ENCODE measurements at regions of chr3 and their contacts with region 1.

Region 1: DNA sequence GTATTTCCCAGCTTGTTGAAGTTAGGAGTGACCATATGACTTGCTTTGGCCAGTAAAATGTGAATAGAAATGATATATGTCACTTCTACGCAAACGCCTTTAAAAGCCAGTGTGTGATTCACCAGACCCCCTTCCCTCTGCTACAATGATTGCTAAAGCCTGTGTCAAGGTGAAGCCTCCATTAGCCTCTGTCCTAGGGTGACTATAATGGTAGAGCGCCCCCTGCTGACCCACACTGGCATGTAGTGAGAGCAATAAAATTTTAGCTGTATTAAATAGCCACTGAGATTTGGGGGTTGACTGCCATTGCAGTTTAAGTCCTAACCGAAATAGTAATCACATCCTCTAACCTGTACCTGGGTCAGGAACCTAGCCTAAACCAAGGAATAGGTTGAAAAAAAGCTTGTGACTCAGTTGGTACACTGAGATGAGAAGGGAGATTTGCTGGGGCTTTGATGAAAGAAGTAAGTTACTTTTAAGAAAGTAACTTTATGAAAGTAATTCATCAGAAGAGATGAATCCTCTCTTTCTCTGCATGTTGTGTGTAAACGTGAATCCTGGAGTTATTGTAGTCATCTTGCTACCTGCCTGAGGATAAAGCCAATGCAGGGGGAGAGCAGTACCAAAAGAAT is 52.6 kb downstream of the GTF2E1 start:
- DNase-seq: peak; percentile 62 to 83 (median 79)
- ATAC-seq: peak; percentile 96
- H3K4me3 ChIP-seq: no peak overlapping the region
- H3K4me3 Mint-ChIP-seq: no peak overlapping the region
- H3K27ac ChIP-seq: no peak overlapping the region
- H3K27ac Mint-ChIP-seq: no peak overlapping the region
- H3K4me1 ChIP-seq: peaks cover 0 to 4% of the 10 kb centered on the region in 2 donors
- H3K4me1 Mint-ChIP-seq: peaks cover 0 to 20% (median 17%) of the 10 kb centered on the region in 7 donors
- H3K27me3 ChIP-seq: no peaks in the 10 kb centered on the region
- H3K27me3 Mint-ChIP-seq: no peaks in the 10 kb centered on the region

Region 2: GRCh38 chr3:119891944-119892721 is 903.0 kb before region 1 on chr3:
- CTCF ChIA-PET with region 1: no interaction called
- POLR2A ChIA-PET with region 1: no interaction called
- intact Hi-C with region 1: loop called in 1 of 2 experiments (anchors 10 kb)
- DNase-seq: peak in 7 of 9 donors; percentile 38 to 68 (median 60)
- ATAC-seq: peak; percentile 78
- H3K4me3 ChIP-seq: no peak overlapping the region
- H3K4me3 Mint-ChIP-seq: peak overlapping the region in 1 of 10 donors; percentile 8
- H3K27ac ChIP-seq: no peak overlapping the region
- H3K27ac Mint-ChIP-seq: peak overlapping the region in 2 of 9 donors; percentile 28 to 39
- H3K4me1 ChIP-seq: no peaks in the 10 kb centered on the region
- H3K4me1 Mint-ChIP-seq: peaks cover 2 to 19% (median 11%) of the 10 kb centered on the region in 7 donors
- H3K27me3 ChIP-seq: no peaks in the 10 kb centered on the region
- H3K27me3 Mint-ChIP-seq: no peaks in the 10 kb centered on the region

Region 3: DNA sequence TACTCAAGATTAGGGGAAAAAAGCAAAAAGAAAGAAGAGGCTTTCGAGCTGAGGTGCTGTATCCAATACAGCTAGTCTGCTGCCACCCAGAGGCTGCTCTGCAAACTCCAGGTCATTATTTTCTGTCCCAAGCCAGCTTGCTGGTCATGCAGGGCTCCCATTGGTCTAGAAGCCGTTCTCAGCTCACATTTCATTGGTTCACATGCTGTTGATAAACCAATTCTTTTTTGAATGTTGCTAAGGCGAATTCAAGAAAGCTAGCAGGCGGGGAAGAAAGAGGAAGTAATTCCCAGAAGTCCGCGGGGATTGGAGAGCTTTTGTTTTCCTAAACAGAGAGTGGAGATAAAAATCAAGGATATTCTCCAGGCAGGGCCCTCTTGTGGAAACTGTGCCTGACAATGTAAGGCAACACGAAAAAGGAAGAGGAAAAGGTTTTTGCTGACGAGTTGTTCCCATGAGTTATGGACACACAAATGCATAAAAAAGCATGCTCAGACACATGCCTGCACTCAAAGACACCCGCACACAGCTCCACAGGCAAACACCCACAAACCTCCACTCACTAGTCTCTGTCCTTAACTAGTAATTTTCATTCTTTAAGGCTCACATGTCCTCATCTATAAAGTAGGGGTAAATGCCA is 377.7 kb before region 1 on chr3:
- CTCF ChIA-PET with region 1: interaction called, 4 read pairs
- POLR2A ChIA-PET with region 1: no interaction called
- intact Hi-C with region 1: loop called (anchors 1 kb)
- DNase-seq: peak; percentile 58 to 83 (median 79)
- ATAC-seq: peak; percentile 100
- H3K4me3 ChIP-seq: peak overlapping the region; percentile 72
- H3K4me3 Mint-ChIP-seq: peak overlapping the region; percentile 80 to 89 (median 88)
- H3K27ac ChIP-seq: no peak overlapping the region
- H3K27ac Mint-ChIP-seq: peak overlapping the region in 8 of 9 donors; percentile 13 to 76 (median 32)
- H3K4me1 ChIP-seq: no peaks in the 10 kb centered on the region
- H3K4me1 Mint-ChIP-seq: peaks cover 16 to 24% (median 18%) of the 10 kb centered on the region in 7 donors
- H3K27me3 ChIP-seq: no peaks in the 10 kb centered on the region
- H3K27me3 Mint-ChIP-seq: peaks cover 0 to 7% (median 6%) of the 10 kb centered on the region in 5 donors

Region 4: DNA sequence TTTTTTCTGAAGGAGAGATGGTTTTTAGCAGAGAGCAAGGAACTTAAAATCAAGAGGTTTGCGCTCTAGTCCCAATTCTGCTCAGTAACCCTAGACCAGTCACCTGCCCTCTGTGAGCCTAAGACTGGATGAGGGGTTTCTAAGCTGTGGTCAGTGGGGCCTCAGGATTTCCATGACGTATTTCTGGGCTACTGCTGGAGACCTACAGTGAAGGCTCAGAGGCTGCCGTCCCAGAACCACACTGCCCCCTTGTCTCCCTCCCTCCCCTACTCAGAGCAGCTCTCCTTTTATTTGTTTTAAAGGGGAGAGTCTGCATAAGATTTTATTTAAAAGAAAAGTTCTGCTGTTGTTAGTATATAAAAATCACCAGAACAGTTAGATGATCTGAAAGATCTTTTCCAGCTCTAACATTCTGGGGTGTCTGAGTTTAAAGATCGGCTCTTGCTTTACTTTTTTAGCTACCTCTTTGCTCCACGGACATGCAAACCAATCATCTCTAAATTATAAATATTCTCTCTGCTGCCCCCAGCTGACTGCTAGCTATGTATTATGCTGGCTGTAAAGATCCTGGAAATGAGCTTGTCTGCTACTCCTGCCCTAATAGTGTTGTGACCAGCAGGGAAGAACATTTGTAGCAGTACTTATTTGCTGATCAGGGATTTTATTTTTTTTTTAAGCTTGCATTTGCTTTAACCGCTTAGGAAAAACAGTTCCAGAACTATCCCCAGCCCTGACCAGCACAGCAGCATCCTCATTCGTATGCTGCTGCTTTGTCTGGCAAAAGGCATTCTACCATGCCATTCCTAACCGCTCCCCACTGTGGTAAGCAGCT is 227.5 kb before region 1 on chr3:
- CTCF ChIA-PET with region 1: interaction called, 114 read pairs
- POLR2A ChIA-PET with region 1: no interaction called
- intact Hi-C with region 1: no loop called
- DNase-seq: peak in 1 of 9 donors; percentile 28
- ATAC-seq: peak; percentile 65
- H3K4me3 ChIP-seq: no peak overlapping the region
- H3K4me3 Mint-ChIP-seq: peak overlapping the region in 9 of 10 donors; percentile 26 to 77 (median 70)
- H3K27ac ChIP-seq: no peak overlapping the region
- H3K27ac Mint-ChIP-seq: peak overlapping the region in 5 of 9 donors; percentile 7 to 58 (median 23)
- H3K4me1 ChIP-seq: no peaks in the 10 kb centered on the region
- H3K4me1 Mint-ChIP-seq: peaks cover 0 to 6% (median 0%) of the 10 kb centered on the region in 7 donors
- H3K27me3 ChIP-seq: peaks cover 0 to 3% of the 10 kb centered on the region in 2 donors
- H3K27me3 Mint-ChIP-seq: peaks cover 0 to 9% (median 4%) of the 10 kb centered on the region in 5 donors

Region 5: GRCh38 chr3:120622870-120623731 is 172.0 kb before region 1 on chr3:
- CTCF ChIA-PET with region 1: no interaction called
- POLR2A ChIA-PET with region 1: no interaction called
- intact Hi-C with region 1: loop called in 1 of 2 experiments (anchors 1 kb)
- DNase-seq: no peak
- ATAC-seq: no peak
- H3K4me3 ChIP-seq: no peak overlapping the region
- H3K4me3 Mint-ChIP-seq: peak overlapping the region in 1 of 10 donors; percentile 61
- H3K27ac ChIP-seq: no peak overlapping the region
- H3K27ac Mint-ChIP-seq: no peak overlapping the region
- H3K4me1 ChIP-seq: no peaks in the 10 kb centered on the region
- H3K4me1 Mint-ChIP-seq: no peaks in the 10 kb centered on the region
- H3K27me3 ChIP-seq: no peaks in the 10 kb centered on the region
- H3K27me3 Mint-ChIP-seq: peaks cover 0 to 13% (median 0%) of the 10 kb centered on the region in 5 donors

Region 6: GRCh38 chr3:120773932-120774331 is 21.2 kb before region 1 on chr3:
- CTCF ChIA-PET with region 1: no interaction called
- POLR2A ChIA-PET with region 1: no interaction called
- intact Hi-C with region 1: no loop called
- DNase-seq: no peak
- ATAC-seq: no peak
- H3K4me3 ChIP-seq: no peak overlapping the region
- H3K4me3 Mint-ChIP-seq: no peak overlapping the region
- H3K27ac ChIP-seq: no peak overlapping the region
- H3K27ac Mint-ChIP-seq: no peak overlapping the region
- H3K4me1 ChIP-seq: no peaks in the 10 kb centered on the region
- H3K4me1 Mint-ChIP-seq: peaks cover 7 to 23% (median 16%) of the 10 kb centered on the region in 7 donors
- H3K27me3 ChIP-seq: no peaks in the 10 kb centered on the region
- H3K27me3 Mint-ChIP-seq: no peaks in the 10 kb centered on the region